ENCODE measurements at regions of chrX and their contacts with region 1.

Region 1: DNA sequence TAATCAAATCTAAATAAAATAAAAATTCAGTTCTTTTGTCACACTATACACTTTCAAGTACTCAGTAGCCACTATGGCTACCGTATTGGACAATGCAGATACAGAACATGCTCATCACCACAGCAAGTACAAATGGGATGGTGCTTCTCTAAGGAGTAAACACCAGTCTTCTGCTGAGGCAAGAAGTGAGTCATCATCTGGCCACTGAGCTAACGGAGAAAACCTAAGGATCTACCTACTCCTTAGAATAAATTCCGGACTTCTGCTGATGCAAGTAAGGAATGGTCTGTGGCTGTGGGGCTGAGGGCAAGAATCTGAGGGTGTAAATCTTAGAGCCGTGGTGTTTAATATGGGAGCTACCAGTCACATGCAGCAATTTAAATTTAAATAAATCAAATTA is 11.3 kb upstream of the RBMXL3 start:
- DNase-seq: no peak
- H3K4me3 ChIP-seq: no peak overlapping the region
- H3K27ac ChIP-seq: no peak overlapping the region
- H3K4me1 ChIP-seq: no peaks in the 10 kb centered on the region
- H3K27me3 ChIP-seq: no peaks in the 10 kb centered on the region
- CTCF ChIP-seq: no peak
- EP300 ChIP-seq: no peak
- POLR2A ChIP-seq: no peak

Region 2: DNA sequence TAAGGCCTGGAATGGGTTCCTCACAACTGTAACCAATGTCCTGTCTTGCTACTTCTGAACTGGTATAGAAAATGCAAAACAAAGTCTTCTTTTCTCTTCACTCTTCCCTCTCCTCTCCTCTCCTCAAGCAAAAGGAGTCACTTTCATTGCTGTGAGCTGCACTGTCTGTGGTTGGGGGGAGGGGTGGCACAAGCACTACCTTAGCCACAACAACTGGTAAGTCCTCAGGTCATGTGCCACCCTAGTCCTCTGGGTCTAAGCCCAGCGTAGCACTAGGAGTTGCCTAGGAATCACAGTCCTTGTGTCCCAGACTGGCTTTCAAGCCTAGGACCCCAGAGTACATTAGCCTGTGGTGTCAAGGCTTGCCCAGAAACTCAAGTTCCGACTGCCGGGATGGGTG is 1478.0 kb before region 1 on chrX:
- in situ Hi-C with region 1: no loop called
- intact Hi-C with region 1: loop called (anchors 5 kb)
- DNase-seq: no peak
- H3K4me3 ChIP-seq: no peak overlapping the region
- H3K27ac ChIP-seq: no peak overlapping the region
- H3K4me1 ChIP-seq: no peaks in the 10 kb centered on the region
- H3K27me3 ChIP-seq: no peaks in the 10 kb centered on the region
- CTCF ChIP-seq: no peak
- EP300 ChIP-seq: no peak
- POLR2A ChIP-seq: no peak

Region 3: DNA sequence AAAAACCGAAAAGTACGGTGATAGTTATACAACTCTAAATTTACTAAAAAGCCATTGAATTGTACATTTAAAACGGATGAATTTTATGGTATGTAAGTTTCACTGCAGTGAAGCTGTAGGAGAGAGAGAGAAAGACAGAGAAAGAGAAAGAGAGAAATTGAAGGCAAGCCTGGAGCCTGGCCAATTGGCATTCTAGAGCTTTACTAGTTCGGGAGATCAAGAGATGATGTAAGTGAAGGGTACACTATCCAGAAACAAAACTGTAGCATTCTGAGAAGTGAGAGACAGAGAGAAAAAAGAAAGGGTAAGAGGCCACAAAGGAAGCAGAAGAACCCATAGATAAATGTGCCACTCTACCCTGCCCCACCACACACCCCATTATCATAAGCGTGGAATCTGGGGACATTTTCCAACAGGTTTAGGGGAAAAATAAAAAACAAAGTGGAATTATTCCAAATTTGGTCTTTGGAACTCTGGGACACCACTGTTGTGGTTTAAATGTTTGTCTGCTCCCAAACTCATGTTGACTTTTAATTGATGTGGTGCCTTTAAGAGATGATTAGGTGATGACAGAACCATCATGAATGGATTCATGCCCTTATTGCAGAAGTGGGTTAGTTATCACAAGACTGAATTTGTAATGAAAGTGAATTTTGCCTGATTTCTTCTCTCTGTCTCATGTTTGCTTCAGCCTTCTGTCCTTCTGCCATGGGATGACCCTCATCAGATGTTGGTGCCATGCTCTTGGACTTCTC is 260.1 kb after region 1 on chrX:
- in situ Hi-C with region 1: no loop called
- intact Hi-C with region 1: no loop called
- DNase-seq: no peak
- H3K4me3 ChIP-seq: no peak overlapping the region
- H3K27ac ChIP-seq: no peak overlapping the region
- H3K4me1 ChIP-seq: no peaks in the 10 kb centered on the region
- H3K27me3 ChIP-seq: no peaks in the 10 kb centered on the region
- CTCF ChIP-seq: no peak
- EP300 ChIP-seq: no peak
- POLR2A ChIP-seq: no peak